ENCODE measurements at regions of chr3 and their contacts with region 1.

Region 1: DNA sequence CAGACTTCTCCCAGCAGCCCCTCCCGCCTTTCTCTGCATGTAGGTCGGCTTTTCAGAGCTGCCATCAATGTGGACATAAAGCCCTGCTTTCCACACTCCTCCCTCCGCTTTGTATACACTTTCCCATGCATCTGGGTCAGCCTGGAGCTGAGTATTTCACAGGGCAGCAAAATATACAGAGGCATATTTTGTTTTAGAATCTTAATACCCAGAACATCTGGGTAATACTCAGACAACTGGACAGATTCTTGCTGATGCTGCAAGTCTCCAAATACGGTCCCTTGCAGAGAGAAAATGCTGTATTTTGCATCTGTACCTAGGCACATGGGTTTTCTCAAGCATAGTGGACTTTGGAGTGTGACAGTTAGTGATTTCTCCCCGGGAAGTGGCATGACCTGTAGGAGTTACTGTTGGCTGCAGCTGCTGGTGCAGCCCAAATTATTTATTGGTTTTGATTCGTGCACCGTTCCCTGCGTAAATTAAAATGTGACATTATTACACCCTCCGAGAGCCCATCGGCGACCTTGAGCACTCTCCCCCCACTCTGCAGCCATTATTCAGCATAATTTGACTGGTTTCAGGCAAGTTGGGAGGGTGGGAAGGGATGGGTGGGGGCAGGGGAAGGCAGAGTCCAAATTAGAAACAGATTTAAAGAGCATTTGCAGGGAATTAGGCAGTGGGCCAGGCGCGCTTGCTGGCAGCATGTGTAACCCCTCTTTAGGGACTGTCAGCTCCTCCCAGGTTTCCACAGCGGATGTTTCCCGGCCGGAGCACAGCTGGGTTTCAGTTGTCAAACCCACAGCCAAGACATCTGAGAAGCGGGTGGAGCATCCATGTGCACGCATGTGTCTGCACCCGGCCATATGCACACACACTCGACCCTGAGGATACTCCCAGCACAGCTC is 100.8 kb downstream of the CPN2 start:
- DNase-seq: peak; percentile 87 to 88
- ATAC-seq: peak; percentile 70 to 81 (median 77)
- H3K4me3 ChIP-seq: peak overlapping the region in 6 of 10 donors; percentile 2 to 21 (median 10)
- H3K27ac ChIP-seq: peak overlapping the region in 2 of 10 donors; percentile 14 to 21
- H3K4me1 ChIP-seq: peaks cover 8 to 55% (median 37%) of the 10 kb centered on the region in 9 donors
- H3K27me3 ChIP-seq: peaks cover 0 to 12% (median 0%) of the 10 kb centered on the region in 7 donors
- CTCF ChIP-seq: no peak

Region 2: DNA sequence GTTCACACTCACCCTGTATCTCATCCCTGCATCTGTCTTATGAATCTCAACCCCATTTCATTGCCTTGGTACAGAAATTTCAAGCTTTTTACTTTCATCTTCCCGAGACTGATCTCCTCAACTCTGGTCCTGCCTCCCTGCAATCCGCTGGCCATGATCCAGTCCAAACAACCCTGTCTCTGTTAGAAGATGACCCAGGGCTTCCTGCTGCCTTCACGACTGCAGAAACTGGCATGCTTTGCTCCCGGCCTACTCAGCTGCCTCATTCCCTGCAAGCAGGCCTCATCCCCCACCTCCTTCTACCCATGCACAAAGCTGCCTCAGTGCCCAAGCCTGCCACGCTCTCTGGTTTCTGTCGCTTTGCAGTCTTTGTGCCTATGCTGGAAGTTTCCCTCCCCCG is 102.0 kb before region 1 on chr3:
- intact Hi-C with region 1: loop called in 3 of 10 experiments (anchors 5 kb)
- DNase-seq: no peak
- ATAC-seq: peak in 1 of 8 donors; percentile 25
- H3K4me3 ChIP-seq: no peak overlapping the region
- H3K27ac ChIP-seq: no peak overlapping the region
- H3K4me1 ChIP-seq: peaks cover 0 to 6% (median 2%) of the 10 kb centered on the region in 9 donors
- H3K27me3 ChIP-seq: peaks cover 0 to 16% (median 0%) of the 10 kb centered on the region in 7 donors
- CTCF ChIP-seq: no peak

Region 3: GRCh38 chr3:194166682-194167479 is 83.5 kb before region 1 on chr3:
- intact Hi-C with region 1: loop called in 1 of 10 experiments (anchors 5 kb)
- DNase-seq: peak; percentile 28 to 47
- ATAC-seq: peak in 7 of 8 donors; percentile 61 to 91 (median 77)
- H3K4me3 ChIP-seq: peak overlapping the region in 2 of 10 donors; percentile 6 to 7
- H3K27ac ChIP-seq: no peak overlapping the region
- H3K4me1 ChIP-seq: peaks cover 0 to 24% (median 14%) of the 10 kb centered on the region in 9 donors
- H3K27me3 ChIP-seq: peaks cover 0 to 38% (median 2%) of the 10 kb centered on the region in 7 donors
- CTCF ChIP-seq: no peak